AG04450 (cell line): ENCODE measurements at regions of chr17 and their contacts with region 1.

Region 1: DNA sequence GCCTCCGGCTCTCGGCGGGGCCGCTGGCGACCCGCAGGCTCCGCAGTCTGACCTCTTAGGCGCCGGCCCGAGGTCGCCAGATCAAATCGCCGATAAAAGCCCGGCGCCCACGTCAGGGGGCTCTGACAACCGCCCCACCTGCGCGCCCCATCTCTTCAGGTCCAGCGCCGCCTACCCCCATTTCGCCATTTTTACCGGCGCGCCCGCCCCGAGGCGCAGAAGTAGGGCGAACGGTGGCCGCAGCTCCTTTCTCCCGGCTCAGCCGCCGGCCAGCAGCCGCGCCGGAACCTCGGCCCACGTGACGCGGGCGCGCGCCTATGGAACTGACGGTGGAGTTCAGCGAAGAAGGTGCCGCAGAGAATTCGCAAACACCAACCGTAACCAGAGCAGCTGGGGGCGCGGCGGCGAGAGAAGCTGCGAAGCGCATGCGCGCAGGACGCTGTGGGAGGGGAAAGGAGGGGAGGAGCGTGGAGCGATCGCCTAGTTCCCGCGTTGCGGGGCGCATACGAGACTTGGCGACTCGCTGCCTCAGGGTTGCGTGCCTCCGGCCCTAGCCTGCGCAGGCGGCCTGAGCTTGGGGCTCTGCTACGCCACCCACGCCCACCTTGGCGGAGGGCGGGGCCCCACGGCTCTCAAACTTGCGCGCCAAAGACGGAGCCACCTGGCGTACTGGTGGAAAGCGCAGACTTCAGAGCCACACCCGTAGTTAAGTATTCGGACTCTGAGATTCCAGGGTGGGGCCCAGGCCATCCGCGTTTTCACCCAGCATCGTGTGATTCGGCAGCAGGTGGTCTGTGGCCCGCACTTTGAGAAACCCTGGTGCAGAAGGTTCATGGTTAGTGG is at the start of gene TRIM37:
- DNase-seq: peak; percentile 98
- H3K4me3 ChIP-seq: peak within 1 kb of the TSS; percentile 86
- H3K27ac ChIP-seq: peak within 1 kb of the TSS; percentile 96
- H3K27me3 ChIP-seq: no peaks in the 10 kb centered on the region
- CTCF ChIP-seq: no peak; the same call in 1 of the 2 replicates
- polyA plus RNA-seq, gene TRIM37: 29.1 and 34.8 TPM in 2 replicates

Region 2: GRCh38 chr17:59093702-59094231 is 12.9 kb before region 1 on chr17:
- CTCF ChIA-PET with region 1: interaction called, 6 read pairs
- POLR2A ChIA-PET with region 1: interaction called, 14 read pairs
- DNase-seq: peak; percentile 81
- H3K4me3 ChIP-seq: peak overlapping the region; percentile 0; the same call in 1 of the 2 replicates
- H3K27ac ChIP-seq: peak overlapping the region; percentile 86
- H3K27me3 ChIP-seq: no peaks in the 10 kb centered on the region
- CTCF ChIP-seq: no peak